ENCODE measurements at regions of chr10 and their contacts with region 1.

Region 1: DNA sequence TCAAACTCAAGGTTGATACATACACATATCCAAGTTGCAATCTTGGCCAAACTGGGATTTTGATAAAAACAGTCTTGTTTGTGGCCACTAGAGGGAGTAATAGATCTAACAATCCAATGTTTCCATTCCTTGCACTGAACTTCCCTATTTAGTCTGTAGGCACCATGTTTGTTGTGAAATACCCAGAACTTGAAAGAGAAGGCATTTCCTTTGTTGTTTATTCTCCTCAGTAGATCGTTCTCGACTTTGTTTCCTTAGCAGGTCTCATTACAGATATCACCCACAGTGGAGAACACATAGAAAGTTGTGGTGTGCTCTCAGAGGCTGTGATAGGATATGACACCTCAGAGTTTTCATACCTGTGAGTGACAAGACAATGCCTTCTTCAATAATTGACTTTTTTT is 70.3 kb upstream of the MXI1 start:
- DNase-seq: peak; percentile 59
- ATAC-seq: peak; percentile 84
- H3K4me3 ChIP-seq: no peak overlapping the region
- H3K27ac ChIP-seq: no peak overlapping the region
- H3K4me1 ChIP-seq: no peaks in the 10 kb centered on the region
- H3K27me3 ChIP-seq: no peaks in the 10 kb centered on the region
- CTCF ChIP-seq: peak; percentile 78; the same call in 1 of the 2 replicates

Region 2: GRCh38 chr10:110225756-110226542 is 88.8 kb after region 1 on chr10:
- CTCF ChIA-PET with region 1: interaction called, 4 read pairs
- POLR2A ChIA-PET with region 1: no interaction called
- in situ Hi-C with region 1: no loop called
- intact Hi-C with region 1: loop called (anchors 2 kb)
- DNase-seq: no peak
- ATAC-seq: peak; percentile 95
- H3K4me3 ChIP-seq: peak overlapping the region; percentile 71 to 79
- H3K27ac ChIP-seq: peak overlapping the region; percentile 30
- H3K4me1 ChIP-seq: peaks cover 3% of the 10 kb centered on the region; the same call in 1 of the 2 replicates
- H3K27me3 ChIP-seq: no peaks in the 10 kb centered on the region; the same call in 1 of the 2 replicates
- CTCF ChIP-seq: peak; percentile 93

Region 3: GRCh38 chr10:110279407-110279986 is 142.4 kb after region 1 on chr10:
- CTCF ChIA-PET with region 1: interaction called, 6 read pairs
- POLR2A ChIA-PET with region 1: no interaction called
- in situ Hi-C with region 1: no loop called
- intact Hi-C with region 1: loop called (anchors 1 kb)
- DNase-seq: peak; percentile 52
- ATAC-seq: peak; percentile 90
- H3K4me3 ChIP-seq: no peak overlapping the region
- H3K27ac ChIP-seq: no peak overlapping the region
- H3K4me1 ChIP-seq: no peaks in the 10 kb centered on the region
- H3K27me3 ChIP-seq: no peaks in the 10 kb centered on the region
- CTCF ChIP-seq: peak; percentile 80

Measured in Panc1 (cell line).